ENCODE measurements at regions of chr2 and their contacts with region 1.

Region 1: DNA sequence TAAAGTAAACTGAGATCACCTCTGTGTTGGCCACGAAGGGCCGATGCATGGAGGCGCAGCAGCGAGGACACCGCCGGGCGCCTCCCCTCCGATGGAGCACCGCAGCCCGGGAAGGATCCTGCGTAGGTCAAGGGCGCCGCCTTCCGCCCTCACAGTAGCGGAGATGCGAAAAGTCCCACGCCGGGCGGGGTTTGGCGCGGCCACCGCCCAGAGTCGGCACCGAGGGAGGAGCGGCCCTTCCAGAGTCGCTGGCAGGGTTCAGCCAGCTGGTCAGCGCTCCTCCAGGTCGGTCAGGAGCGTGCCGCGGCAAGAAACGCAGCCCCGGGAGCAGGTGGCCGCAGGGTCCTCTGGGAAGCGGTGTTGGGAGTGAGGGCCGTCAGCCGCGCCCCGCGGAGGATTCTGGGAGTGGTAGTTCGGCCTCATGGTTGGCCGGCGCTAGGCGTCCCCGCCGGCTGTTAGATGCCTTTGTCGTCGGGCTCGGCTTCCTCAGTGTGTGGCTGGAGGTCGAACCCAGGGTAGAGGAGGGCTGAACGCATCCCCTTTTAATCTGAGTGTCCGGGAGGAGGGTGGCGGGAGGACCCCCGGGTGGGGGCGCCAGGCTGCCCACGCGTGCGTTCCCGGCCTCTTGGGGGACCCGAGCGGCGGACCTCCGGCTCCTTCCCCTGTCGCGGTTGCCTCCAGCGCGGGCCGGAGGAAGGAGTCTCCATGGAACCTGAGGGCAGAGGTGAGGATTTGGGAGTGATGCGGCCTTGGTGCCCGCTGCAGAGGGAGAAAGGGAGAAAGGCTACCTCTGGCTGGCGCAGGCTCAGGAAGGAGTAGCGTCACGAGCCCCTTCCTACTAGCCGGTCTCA is at the start of gene ZNF892:
- DNase-seq: peak; percentile 91 to 95 (median 94)
- ATAC-seq: peak; percentile 97 to 99 (median 99)
- H3K4me3 ChIP-seq: peak within 1 kb of the TSS; percentile 57 to 94 (median 78)
- H3K27ac ChIP-seq: peak within 1 kb of the TSS; percentile 19 to 96 (median 92)
- H3K4me1 ChIP-seq: peaks cover 0 to 21% (median 10%) of the 10 kb centered on the region in 12 donors
- H3K27me3 ChIP-seq: no peaks in the 10 kb centered on the region
- CTCF ChIP-seq: peak in 11 of 12 donors; percentile 12 to 70 (median 53)
- POLR2A ChIP-seq: peak in 1 of 2 donors; percentile 67
- total RNA-seq, gene ZNF892: 2.0 to 4.9 (median 3.7) TPM

Region 2: DNA sequence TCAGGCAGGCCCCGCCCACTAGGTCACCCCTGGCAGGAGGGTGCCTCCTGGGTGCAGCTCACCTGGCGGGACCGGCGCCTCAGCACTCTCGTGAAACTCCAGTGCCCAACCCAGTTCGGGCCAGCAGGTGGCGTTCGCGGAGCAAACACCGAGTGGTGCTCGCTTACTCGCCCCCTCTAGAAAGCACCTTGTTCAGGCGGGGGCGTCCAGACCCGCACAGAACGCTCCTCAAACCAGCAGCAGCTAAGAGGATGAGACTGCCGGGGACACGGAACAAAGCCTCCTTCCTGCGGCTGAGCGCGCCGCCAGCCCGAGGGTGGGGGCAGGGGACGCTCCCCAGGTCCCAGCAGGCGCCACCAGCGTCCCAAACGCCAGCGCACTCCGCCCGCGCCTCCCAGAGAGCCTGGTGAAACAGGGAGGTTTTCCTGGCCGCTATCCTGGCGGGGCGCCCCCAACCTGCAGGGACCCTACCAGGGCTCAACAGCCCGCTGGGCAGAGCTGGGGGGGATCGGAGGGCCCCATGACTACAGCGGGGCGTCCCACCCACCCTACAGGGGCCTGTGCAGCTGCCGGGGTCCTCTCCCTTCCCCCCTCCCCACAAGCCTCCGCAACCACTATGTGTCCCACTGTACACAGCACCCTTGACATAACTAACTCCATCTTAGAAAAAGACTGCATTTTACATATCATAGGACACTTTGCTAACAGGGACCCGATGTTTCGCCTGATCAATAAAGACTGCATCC is 130.4 kb before region 1 on chr2:
- intact Hi-C with region 1: loop called in 2 of 10 experiments (anchors 5 kb)
- DNase-seq: peak; percentile 46 to 85 (median 64)
- ATAC-seq: peak; percentile 64 to 87 (median 75)
- H3K4me3 ChIP-seq: peak overlapping the region in 11 of 12 donors; percentile 9 to 59 (median 46)
- H3K27ac ChIP-seq: no peak overlapping the region
- H3K4me1 ChIP-seq: peaks cover 0 to 11% (median 7%) of the 10 kb centered on the region in 12 donors
- H3K27me3 ChIP-seq: peaks cover 0 to 48% (median 21%) of the 10 kb centered on the region in 9 donors
- CTCF ChIP-seq: peak; percentile 64 to 85 (median 78)
- POLR2A ChIP-seq: no peak

Region 3: DNA sequence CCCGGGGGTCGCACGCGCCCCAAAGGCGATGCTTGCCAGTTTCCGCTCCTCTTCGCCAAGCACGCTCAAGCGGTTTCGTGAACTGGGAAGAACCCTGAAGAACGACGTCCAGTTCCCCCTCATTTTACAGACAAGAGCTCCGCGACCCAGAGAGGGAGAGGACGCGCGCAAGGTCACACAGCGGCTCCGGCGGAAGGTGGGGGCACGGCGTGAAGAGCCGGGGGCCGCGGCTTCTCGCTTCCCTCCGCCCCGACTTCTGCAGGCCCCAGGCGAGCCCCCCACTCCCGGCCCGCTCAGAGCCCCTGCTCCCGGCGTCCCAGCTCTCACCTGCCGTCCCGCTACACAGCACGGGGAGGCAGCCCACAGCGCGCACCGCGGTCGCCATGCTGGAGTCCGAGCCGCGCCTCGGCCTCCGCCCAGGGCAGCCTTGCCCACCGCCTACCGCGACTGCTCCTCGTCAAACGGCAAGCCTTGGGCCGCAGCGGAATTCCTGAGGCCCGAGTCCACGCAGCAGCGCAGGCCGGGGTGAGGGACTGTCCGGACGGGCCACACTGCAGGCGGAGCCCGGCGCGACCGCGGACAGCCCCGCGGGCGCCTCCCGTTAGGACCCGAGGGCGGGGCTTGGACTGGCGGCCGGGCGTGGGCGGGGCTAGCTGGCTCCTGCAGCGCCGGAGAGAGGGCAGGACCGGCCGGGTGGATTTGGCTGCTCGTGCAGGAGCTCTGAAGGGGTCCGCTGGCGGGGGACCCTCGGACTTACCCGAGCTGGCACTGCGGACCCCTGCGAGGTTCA is 85.7 kb before region 1 on chr2 and contains the start of gene MRPS5:
- intact Hi-C with region 1: loop called in 3 of 10 experiments (anchors 2 to 10 kb)
- DNase-seq: peak; percentile 88 to 95 (median 90)
- ATAC-seq: peak; percentile 93 to 99 (median 98)
- H3K4me3 ChIP-seq: peak within 1 kb of the TSS; percentile 60 to 100 (median 88)
- H3K27ac ChIP-seq: peak within 1 kb of the TSS; percentile 85 to 99 (median 96)
- H3K4me1 ChIP-seq: peaks cover 0 to 42% (median 26%) of the 10 kb centered on the region in 12 donors
- H3K27me3 ChIP-seq: no peaks in the 10 kb centered on the region
- CTCF ChIP-seq: peak in 4 of 12 donors; percentile 18 to 46 (median 26)
- POLR2A ChIP-seq: peak in 1 of 2 donors; percentile 86
- total RNA-seq, gene MRPS5: 52.4 to 80.0 (median 69.7) TPM

Region 4: GRCh38 chr2:95159690-95160449 is 47.5 kb before region 1 on chr2 and contains the start of gene ZNF514:
- intact Hi-C with region 1: loop called in 6 of 10 experiments (anchors 1 to 5 kb)
- DNase-seq: peak; percentile 79 to 90 (median 87)
- ATAC-seq: peak; percentile 68 to 93 (median 91)
- H3K4me3 ChIP-seq: peak within 1 kb of the TSS; percentile 50 to 93 (median 81)
- H3K27ac ChIP-seq: peak within 1 kb of the TSS; percentile 35 to 91 (median 80)
- H3K4me1 ChIP-seq: peaks cover 5 to 36% (median 22%) of the 10 kb centered on the region in 12 donors
- H3K27me3 ChIP-seq: no peaks in the 10 kb centered on the region
- CTCF ChIP-seq: no peak
- POLR2A ChIP-seq: peak in 1 of 2 donors; percentile 33
- total RNA-seq, gene ZNF514: 6.1 to 16.8 (median 11.2) TPM

Region 5: GRCh38 chr2:95165129-95166064 is 41.9 kb before region 1 on chr2 and contains the start of gene ZNF2:
- intact Hi-C with region 1: loop called in 6 of 10 experiments (anchors 1 to 5 kb)
- DNase-seq: peak; percentile 98 to 99 (median 99)
- ATAC-seq: peak; percentile 96 to 99 (median 98)
- H3K4me3 ChIP-seq: peak within 1 kb of the TSS; percentile 65 to 94 (median 81)
- H3K27ac ChIP-seq: peak within 1 kb of the TSS; percentile 65 to 97 (median 94)
- H3K4me1 ChIP-seq: peaks cover 0 to 25% (median 19%) of the 10 kb centered on the region in 12 donors
- H3K27me3 ChIP-seq: no peaks in the 10 kb centered on the region
- CTCF ChIP-seq: peak in 3 of 12 donors; percentile 5 to 17 (median 10)
- POLR2A ChIP-seq: peak in 1 of 2 donors; percentile 71
- total RNA-seq, gene ZNF2: 2.5 to 5.9 (median 3.5) TPM